Endothelial cell of umbilical vein (primary cell): ENCODE measurements at regions of chr11 and their contacts with region 1.

Region 1: DNA sequence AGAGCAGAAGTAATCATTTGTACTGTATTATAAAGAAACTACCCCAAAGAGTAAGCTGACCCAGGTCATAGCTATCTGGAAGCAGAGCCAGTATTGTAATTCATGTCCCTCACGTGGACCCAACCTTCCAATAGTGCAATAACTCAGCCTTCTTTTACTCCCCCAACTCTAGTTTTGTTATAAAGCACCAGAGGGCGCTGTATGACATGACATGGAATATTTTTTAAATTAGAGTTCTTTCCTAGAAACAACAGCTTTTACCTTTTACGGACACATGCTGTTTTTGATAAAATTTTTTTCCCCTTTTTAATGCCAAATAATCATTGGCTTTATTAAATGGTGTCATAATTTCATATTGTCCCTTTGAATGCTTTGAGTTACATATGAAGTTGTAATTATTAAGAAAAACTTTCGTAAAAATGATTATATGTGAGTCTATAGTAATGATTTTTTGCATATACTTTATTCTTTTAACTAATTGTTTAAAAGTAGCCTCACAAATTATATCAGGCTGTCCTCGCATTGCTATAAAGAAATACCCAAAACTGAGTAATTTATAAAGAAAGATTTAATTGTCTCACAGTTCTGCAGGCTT is 76.9 kb downstream of the DKK3 start:
- DNase-seq: peak; percentile 79
- H3K4me3 ChIP-seq: no peak overlapping the region
- H3K27ac ChIP-seq: no peak overlapping the region
- H3K4me1 ChIP-seq: peaks cover 6% of the 10 kb centered on the region
- H3K27me3 ChIP-seq: no peaks in the 10 kb centered on the region
- CTCF ChIP-seq: peak; percentile 32 to 51
- POLR2A ChIP-seq: no peak

Region 2: DNA sequence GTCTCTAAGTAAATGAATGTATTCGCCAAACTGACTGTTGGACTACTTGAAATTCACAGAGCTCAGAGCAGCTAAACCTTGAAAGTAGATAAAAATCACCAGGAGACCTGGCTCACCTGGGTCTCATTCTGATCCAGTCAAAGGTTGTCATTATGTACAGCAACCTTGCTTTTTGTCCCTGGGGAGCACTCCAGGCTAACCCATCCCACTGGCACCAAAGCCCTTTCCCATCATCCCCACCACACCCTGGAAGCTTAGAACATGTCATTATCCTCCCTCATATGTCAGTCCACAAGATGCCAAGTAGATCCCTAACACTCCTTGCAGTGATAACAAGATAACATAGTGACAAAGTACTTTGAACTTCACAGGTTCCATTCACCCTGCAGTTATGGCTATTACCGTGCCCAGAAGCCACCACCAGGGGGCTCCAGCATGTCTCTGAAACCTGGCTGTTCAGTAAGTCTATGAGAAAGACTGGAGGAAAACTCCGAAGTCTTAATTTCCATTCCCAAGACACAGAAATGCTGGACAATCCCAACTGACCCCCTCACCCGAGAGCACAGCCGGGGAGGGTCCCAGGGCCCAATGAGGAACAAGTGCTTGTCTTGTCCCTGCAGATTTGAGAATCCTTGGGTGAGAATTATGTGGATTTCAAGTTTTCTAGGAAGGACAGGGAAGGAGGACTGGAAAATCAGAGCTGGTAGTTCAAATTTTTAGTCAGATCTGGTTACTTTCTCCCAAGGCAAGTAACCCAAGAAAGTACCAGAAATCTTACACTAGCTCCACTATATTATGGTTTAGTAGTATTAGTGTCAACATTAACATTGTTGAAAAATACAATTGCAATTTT is 132.7 kb before region 1 on chr11:
- CTCF ChIA-PET with region 1: interaction called, 10 read pairs
- POLR2A ChIA-PET with region 1: no interaction called
- dilution Hi-C with region 1: no loop called
- intact Hi-C with region 1: loop called (anchors 1 kb)
- DNase-seq: peak; percentile 76
- H3K4me3 ChIP-seq: no peak overlapping the region
- H3K27ac ChIP-seq: no peak overlapping the region
- H3K4me1 ChIP-seq: no peaks in the 10 kb centered on the region
- H3K27me3 ChIP-seq: peaks cover 24 to 28% of the 10 kb centered on the region in 2 experiments
- CTCF ChIP-seq: peak; percentile 86 to 87
- POLR2A ChIP-seq: no peak

Region 3: GRCh38 chr11:11946180-11946579 is 14.6 kb after region 1 on chr11:
- CTCF ChIA-PET with region 1: interaction called, 16 read pairs
- POLR2A ChIA-PET with region 1: no interaction called
- dilution Hi-C with region 1: no loop called
- intact Hi-C with region 1: no loop called
- DNase-seq: no peak
- H3K4me3 ChIP-seq: no peak overlapping the region
- H3K27ac ChIP-seq: no peak overlapping the region
- H3K4me1 ChIP-seq: no peaks in the 10 kb centered on the region
- H3K27me3 ChIP-seq: no peaks in the 10 kb centered on the region
- CTCF ChIP-seq: no peak
- POLR2A ChIP-seq: no peak

Region 4: DNA sequence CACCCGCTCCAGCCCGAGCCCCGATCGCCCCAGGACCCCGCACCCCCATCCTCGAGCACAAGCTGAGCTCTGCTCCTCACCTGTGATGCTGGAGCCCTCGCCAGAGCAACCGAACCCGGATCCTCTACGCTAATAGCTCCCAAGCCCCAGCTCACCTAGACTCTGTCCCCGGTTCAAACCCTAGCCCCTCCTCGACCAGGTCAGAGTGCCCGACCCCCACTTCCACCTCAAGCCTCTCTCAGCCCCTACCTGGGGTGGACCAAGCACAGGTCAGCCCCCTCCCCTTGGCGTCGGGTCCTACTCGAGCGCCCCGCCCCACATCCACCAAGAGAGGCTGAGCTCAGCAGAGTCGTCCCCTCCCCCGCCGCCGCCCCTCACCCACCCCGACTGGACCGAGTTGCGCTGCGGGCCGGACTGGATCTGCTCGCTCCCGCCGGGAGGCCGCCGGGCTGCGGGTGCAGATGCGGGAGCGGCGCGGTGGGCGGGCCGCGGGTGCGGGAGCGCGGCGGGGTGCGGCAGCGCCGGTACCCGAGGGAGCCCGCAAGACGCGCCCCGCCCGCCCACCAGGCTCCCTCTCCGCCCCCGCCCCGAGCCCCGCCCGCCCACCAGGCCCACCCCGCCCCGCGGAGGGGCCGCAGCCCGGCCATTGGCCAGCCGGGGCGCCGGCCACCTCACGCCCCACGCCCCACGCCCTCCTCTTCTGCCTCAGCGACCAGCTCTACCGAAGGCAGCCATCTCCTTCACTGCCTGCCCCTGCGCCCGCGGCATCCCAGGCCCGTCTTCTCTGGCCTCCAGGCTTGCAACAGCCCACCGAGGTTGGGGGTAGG is 77.4 kb after region 1 on chr11:
- CTCF ChIA-PET with region 1: interaction called, 10 read pairs
- POLR2A ChIA-PET with region 1: no interaction called
- dilution Hi-C with region 1: no loop called
- intact Hi-C with region 1: no loop called
- DNase-seq: peak; percentile 69
- H3K4me3 ChIP-seq: peak overlapping the region; percentile 79 to 97 (median 91)
- H3K27ac ChIP-seq: peak overlapping the region; percentile 12
- H3K4me1 ChIP-seq: peaks cover 37% of the 10 kb centered on the region
- H3K27me3 ChIP-seq: peaks cover 0 to 2% of the 10 kb centered on the region in 2 experiments
- CTCF ChIP-seq: no peak
- POLR2A ChIP-seq: peak; percentile 20

Region 5: GRCh38 chr11:12281571-12282478 is 350.3 kb after region 1 on chr11:
- CTCF ChIA-PET with region 1: interaction called, 36 read pairs
- POLR2A ChIA-PET with region 1: no interaction called
- dilution Hi-C with region 1: no loop called
- intact Hi-C with region 1: loop called (anchors 1 kb)
- DNase-seq: peak; percentile 81
- H3K4me3 ChIP-seq: no peak overlapping the region
- H3K27ac ChIP-seq: no peak overlapping the region
- H3K4me1 ChIP-seq: peaks cover 27% of the 10 kb centered on the region
- H3K27me3 ChIP-seq: no peaks in the 10 kb centered on the region
- CTCF ChIP-seq: peak; percentile 82 to 91
- POLR2A ChIP-seq: no peak